ENCODE measurements at regions of chr2 and their contacts with region 1.

Region 1: GRCh38 chr2:218406209-218406948 is 6.7 kb downstream of the CTDSP1 start:
- DNase-seq: peak; percentile 96
- H3K4me3 Mint-ChIP-seq: peak overlapping the region; percentile 82
- H3K27ac Mint-ChIP-seq: peak overlapping the region; percentile 75
- H3K4me1 Mint-ChIP-seq: peaks cover 34% of the 10 kb centered on the region
- H3K27me3 Mint-ChIP-seq: peaks cover 2% of the 10 kb centered on the region

Region 2: GRCh38 chr2:218286570-218287459 is 119.6 kb before region 1 on chr2:
- CTCF ChIA-PET with region 1: interaction called, 3 read pairs
- intact Hi-C with region 1: loop called (anchors 1 kb)
- DNase-seq: peak; percentile 95
- H3K4me3 Mint-ChIP-seq: peak overlapping the region; percentile 80
- H3K27ac Mint-ChIP-seq: peak overlapping the region; percentile 98
- H3K4me1 Mint-ChIP-seq: peaks cover 73% of the 10 kb centered on the region
- H3K27me3 Mint-ChIP-seq: no peaks in the 10 kb centered on the region

Region 3: DNA sequence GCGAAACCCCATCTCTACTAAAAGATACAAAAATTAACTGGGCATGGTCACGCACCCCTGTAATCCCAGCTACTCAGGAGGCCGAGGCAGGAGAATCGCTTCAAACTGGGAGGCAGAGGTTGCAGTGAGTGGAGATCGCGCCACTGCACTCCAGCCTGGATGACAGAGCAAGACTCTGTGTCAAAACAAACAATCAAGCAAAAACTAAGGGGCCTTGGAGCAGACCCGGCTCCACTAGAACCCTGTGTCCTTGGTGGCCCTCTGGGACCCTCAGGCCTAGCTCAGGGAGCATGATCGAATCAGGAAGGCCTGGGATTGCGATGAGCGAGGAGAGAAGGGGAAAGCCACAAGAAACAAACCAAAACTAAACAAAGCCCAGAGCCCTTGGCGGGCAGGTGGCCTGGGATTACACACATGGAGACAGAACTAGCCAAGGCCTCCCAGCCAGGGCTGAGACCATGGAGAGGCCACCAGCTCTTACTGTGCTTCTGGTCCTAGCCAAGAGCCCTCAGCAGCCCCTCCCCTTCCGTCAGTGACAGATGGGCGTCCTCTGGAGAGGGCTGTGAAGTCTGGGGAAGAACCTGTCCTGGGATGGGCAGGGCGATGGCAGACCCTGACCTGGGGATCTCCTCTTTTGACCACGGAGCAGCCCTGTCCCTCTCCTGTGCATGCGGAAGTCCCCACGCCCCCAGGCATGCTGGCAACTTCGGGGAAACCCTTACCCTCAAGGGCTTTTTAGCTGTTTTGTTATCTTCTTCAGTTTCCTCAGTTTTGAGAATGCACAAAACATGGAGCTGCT is 77.2 kb before region 1 on chr2:
- CTCF ChIA-PET with region 1: no interaction called
- intact Hi-C with region 1: no loop called
- DNase-seq: no peak
- H3K4me3 Mint-ChIP-seq: no peak overlapping the region
- H3K27ac Mint-ChIP-seq: no peak overlapping the region
- H3K4me1 Mint-ChIP-seq: peaks cover 21% of the 10 kb centered on the region
- H3K27me3 Mint-ChIP-seq: no peaks in the 10 kb centered on the region

Region 4: DNA sequence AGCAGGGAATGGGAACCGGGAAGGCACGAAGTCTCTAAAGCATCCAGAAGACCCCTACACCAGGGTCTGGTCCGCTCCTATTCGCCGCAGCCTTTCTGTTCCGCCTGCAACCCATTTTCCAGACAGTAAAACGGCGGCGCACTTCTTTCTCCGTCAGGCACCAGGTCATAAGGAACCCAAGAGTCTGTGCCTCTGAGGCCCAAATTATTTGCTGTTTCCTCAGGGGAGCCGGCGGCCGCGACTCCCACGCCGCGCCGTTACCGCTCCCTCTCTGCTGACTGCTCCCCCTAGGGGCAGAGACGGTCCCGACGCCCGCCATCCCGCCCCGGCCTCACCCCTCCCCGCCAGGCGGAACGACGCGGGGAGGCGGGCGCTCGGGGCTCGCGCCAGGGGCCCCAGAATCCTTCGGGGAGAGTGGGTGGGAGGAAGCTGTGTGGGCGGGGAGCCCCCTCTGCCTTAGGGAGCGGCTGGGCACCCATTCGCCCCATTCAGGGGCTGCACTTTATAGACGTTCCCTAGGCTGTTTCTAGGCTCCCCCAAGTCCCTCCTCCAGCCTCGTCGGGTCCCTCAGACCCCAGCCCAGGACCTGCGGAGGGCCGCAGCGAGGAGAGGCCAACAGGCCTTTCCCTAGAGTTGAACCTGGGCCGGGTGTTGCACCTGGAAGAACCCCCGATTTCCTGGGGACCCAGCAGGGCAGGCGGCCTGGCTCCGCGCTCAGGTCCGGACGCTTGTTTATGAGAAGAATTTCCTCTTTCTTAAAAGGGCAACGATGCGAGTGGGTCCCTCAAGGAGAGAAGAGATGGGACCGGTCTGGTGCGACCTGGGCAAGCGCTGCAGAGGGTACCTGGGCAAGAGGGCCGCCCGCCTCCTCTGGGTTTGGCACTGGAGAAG is 10.3 kb before region 1 on chr2:
- CTCF ChIA-PET with region 1: no interaction called
- intact Hi-C with region 1: loop called (anchors 1 kb)
- DNase-seq: peak; percentile 95
- H3K4me3 Mint-ChIP-seq: peak overlapping the region; percentile 88
- H3K27ac Mint-ChIP-seq: peak overlapping the region; percentile 92
- H3K4me1 Mint-ChIP-seq: peaks cover 25% of the 10 kb centered on the region
- H3K27me3 Mint-ChIP-seq: peaks cover 11% of the 10 kb centered on the region

Region 5: DNA sequence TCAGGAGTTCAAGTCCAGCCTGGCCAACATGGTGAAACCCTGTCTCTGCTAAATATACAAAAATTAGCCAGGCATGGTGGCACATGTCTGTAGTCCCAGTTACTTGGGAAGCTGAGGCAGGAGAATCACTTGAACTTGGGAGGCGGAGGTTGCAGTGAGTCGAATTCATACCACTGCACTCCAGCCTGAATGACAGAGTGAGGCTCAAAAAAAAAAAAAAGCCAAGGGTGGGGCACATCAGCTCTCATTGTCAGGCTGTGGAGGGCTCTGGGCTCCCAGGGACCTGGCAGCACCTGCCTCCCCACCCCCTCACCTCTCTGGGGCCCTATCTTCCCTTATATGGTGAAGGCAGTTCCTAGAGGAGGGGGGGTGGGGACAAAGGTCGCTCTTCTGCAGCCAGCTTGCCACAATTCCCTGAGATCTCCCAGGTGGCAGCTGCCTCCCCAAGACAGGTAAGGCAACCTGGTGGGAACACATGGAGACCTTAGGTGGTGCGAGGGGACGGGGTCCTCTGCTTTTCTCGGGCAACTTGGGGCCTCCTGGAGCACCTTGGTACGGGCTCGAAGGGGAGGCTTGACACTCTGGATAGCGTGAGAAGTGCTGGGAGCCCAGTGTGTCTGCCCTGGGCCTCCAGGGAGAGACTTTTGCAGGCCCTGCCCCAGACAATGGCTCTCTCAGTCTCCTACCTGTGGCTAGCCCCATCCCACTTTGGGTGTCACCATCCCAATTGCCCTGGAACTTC is 12.5 kb after region 1 on chr2 and contains the start of gene VIL1:
- CTCF ChIA-PET with region 1: no interaction called
- intact Hi-C with region 1: no loop called
- DNase-seq: no peak
- H3K4me3 Mint-ChIP-seq: no peak within 1 kb of the TSS
- H3K27ac Mint-ChIP-seq: no peak within 1 kb of the TSS
- H3K4me1 Mint-ChIP-seq: no peaks in the 10 kb centered on the region
- H3K27me3 Mint-ChIP-seq: no peaks in the 10 kb centered on the region
- total RNA-seq, gene VIL1: not detected

Region 6: DNA sequence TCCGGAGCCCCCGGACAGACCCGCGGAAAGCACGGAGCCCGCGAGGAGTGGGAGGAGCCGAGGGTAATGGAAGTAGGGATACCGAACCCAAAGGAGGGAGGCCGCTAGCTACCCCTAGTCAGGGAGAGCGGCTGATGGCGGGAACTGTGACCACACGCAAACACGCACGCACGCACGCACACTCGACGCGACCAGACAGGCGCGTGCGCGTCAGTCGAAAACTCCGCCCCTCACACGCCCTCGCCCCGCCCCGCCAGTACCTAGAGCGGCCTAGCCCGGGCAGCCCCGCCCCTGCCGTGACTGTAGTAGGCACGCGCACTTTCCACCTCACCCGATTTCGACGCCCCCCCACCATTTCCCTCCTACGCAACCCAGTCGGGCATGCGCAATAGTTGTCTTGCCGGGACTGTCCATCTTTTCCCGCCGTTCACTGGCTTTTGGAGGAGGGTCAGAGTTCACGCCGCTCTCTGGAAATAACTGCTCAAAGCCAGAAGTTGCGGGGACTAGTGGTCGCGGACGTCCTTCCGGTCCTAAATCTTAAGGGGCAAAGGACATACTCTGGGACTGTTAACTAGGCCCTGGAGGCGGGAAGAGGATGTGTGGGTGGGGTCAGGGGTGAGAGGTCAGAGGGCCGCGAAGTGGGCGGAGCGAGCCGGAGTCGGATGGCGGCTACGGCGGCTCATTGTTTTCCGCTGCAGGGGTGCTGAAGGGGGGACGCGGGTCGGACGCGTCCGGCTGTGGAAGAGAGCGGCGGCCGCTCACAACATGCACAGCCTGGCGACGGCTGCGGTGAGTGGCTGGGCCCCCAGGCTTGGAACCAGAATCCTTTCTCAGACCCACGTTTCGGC is 162.0 kb after region 1 on chr2 and contains the starts of genes CNOT9 and USP37:
- CTCF ChIA-PET with region 1: interaction called, 3 read pairs
- intact Hi-C with region 1: loop called (anchors 1 kb)
- DNase-seq: peak; percentile 100
- H3K4me3 Mint-ChIP-seq: peak within 1 kb of the TSS; percentile 91
- H3K27ac Mint-ChIP-seq: peak within 1 kb of the TSS; percentile 100
- H3K4me1 Mint-ChIP-seq: peaks cover 60% of the 10 kb centered on the region
- H3K27me3 Mint-ChIP-seq: no peaks in the 10 kb centered on the region
- total RNA-seq, gene CNOT9: 74.3 to 78.6 TPM
- total RNA-seq, gene USP37: 21.7 to 23.2 TPM

Region 7: GRCh38 chr2:218671654-218672566 is 265.5 kb after region 1 on chr2 and contains the starts of genes RNF25 and STK36:
- CTCF ChIA-PET with region 1: interaction called, 3 read pairs
- intact Hi-C with region 1: loop called (anchors 5 kb)
- DNase-seq: peak; percentile 86
- H3K4me3 Mint-ChIP-seq: peak within 1 kb of the TSS; percentile 98
- H3K27ac Mint-ChIP-seq: peak within 1 kb of the TSS; percentile 90
- H3K4me1 Mint-ChIP-seq: peaks cover 22% of the 10 kb centered on the region
- H3K27me3 Mint-ChIP-seq: no peaks in the 10 kb centered on the region
- total RNA-seq, gene RNF25: 9.6 to 10.4 TPM
- total RNA-seq, gene STK36: 14.7 to 15.1 TPM

Region 8: GRCh38 chr2:219177552-219178376 is 771.4 kb after region 1 on chr2 and contains the start of gene RETREG2:
- CTCF ChIA-PET with region 1: no interaction called
- intact Hi-C with region 1: loop called (anchors 10 kb)
- DNase-seq: peak; percentile 78
- H3K4me3 Mint-ChIP-seq: peak within 1 kb of the TSS; percentile 94
- H3K27ac Mint-ChIP-seq: peak within 1 kb of the TSS; percentile 98
- H3K4me1 Mint-ChIP-seq: peaks cover 58% of the 10 kb centered on the region
- H3K27me3 Mint-ChIP-seq: no peaks in the 10 kb centered on the region
- total RNA-seq, gene RETREG2: 44.0 to 44.1 TPM

Measured in activated naive CD4-positive, alpha-beta T cell treated with anti-CD3 and anti-CD28 coated beads for 36 hours (primary cell).